Activated T-helper 1 cell treated with anti-CD3 and anti-CD28 coated beads, Interleukin-12 subunit alpha, Interleukin-12 subunit beta, Interleukin-2, Interleukin-4 antibody, amounts not matched to agents 30 ng/mL and 10 ng/mL and 1 ng/mL, durations not matched to agents 14 hours and 24 hours and 36 hours (primary cell): ENCODE measurements at regions of chr5 and their contacts with region 1.

Region 1: GRCh38 chr5:179821581-179822432 is 1.1 kb downstream of the SQSTM1 start:
- DNase-seq: peak; percentile 83
- H3K4me3 Mint-ChIP-seq: peak overlapping the region; percentile 95
- H3K27ac Mint-ChIP-seq: peak overlapping the region; percentile 97
- H3K4me1 Mint-ChIP-seq: peaks cover 48% of the 10 kb centered on the region
- H3K27me3 Mint-ChIP-seq: no peaks in the 10 kb centered on the region

Region 2: GRCh38 chr5:179697993-179698934 is 123.5 kb before region 1 on chr5:
- intact Hi-C with region 1: loop called (anchors 1 kb)
- DNase-seq: peak; percentile 99
- H3K4me3 Mint-ChIP-seq: peak overlapping the region; percentile 100
- H3K27ac Mint-ChIP-seq: peak overlapping the region; percentile 100
- H3K4me1 Mint-ChIP-seq: peaks cover 27% of the 10 kb centered on the region
- H3K27me3 Mint-ChIP-seq: no peaks in the 10 kb centered on the region

Region 3: GRCh38 chr5:179806250-179807222 is 15.3 kb before region 1 on chr5 and contains the start of gene MGAT4B:
- intact Hi-C with region 1: loop called (anchors 1 kb)
- DNase-seq: peak; percentile 67
- H3K4me3 Mint-ChIP-seq: peak within 1 kb of the TSS; percentile 86
- H3K27ac Mint-ChIP-seq: peak within 1 kb of the TSS; percentile 81
- H3K4me1 Mint-ChIP-seq: peaks cover 32% of the 10 kb centered on the region
- H3K27me3 Mint-ChIP-seq: no peaks in the 10 kb centered on the region
- total RNA-seq, gene MGAT4B: 124 and 132 TPM in 2 replicates

Region 4: DNA sequence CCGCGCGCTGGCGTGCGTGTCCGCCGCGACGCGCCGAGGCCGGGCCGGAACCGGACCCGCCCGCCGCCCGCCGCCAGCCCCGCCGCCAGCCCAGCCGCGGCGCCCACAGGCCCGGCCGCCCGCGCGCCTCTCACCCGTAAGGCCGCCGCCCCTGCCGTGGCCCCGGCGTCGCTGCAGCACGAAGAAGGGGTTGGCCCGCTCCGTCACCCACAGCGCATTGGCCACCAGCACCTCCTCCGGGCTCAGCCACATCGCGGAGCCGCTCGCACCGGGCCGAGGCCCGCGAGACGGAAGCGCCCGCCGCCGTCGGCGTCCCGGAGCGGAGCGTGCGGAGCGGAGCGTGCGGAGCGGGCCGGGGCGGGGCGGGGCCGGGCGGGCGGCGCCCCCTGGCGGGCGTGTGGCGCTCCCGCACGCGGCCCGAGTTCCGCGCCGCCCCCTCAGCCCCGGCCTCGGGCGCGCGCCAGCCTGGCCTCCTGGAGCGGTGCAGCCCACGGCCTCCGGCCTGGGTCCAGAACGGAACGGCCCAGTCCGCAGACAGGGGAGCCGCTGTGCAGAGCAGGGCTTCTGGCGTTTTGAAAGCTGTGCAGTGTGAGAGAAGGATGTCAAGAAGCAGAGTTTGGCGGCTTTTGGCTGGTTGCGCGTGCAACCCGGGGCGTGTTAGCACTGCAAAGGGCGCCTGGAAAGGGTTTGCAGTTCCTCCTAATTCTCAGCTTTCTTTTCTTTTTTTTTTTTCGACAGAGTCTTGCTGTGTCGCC is 85.9 kb after region 1 on chr5 and contains the start of gene TBC1D9B:
- intact Hi-C with region 1: loop called (anchors 1 kb)
- DNase-seq: peak; percentile 69
- H3K4me3 Mint-ChIP-seq: peak within 1 kb of the TSS; percentile 95
- H3K27ac Mint-ChIP-seq: peak within 1 kb of the TSS; percentile 89
- H3K4me1 Mint-ChIP-seq: peaks cover 18% of the 10 kb centered on the region
- H3K27me3 Mint-ChIP-seq: peaks cover 2% of the 10 kb centered on the region
- total RNA-seq, gene TBC1D9B: 123 and 127 TPM in 2 replicates

Region 5: DNA sequence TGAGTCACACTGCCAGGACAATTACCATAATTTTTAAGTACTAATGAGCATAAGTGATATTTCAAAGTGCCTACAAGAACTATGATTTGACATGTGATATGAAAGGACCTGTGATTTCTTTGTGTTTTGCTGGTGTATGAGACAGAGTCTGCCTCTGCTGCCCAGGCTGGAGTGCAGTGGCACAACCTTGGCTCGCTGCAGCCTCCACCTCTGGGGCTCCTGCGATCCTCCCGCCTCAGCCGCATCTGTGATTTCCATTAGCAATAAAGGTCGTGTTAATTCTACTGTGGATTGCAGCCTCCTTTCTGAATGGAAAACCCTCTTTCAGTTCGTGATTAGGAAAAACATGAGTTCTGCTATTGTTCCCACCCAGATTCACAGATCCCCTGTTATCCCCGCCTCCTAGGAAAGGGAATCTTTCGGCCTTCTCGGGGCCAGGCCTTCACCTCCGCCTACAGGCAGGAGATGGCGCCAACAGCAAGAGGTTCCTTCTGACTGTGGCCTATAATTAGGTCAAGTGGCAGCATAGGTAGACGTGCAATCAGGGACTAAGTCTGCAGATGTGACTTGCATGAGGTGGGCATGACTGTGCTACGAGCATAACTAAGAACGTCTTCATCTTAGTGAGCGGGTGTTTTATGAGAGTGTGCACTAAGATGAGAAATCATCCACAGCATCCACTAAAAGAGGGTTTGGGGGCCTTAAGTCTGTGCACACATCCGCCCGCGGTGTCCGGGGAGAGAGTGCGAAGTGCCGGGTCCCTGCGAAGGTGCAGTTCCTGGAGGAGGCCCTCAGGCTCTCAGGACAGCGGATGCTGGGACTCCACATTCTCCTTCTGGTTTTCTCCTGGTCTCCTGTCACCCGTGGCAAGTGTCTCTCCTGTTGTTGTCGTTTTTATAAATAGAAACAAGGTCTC is 1360.1 kb after region 1 on chr5:
- intact Hi-C with region 1: loop called (anchors 10 kb)
- DNase-seq: no peak
- H3K4me3 Mint-ChIP-seq: peak overlapping the region; percentile 63
- H3K27ac Mint-ChIP-seq: peak overlapping the region; percentile 64
- H3K4me1 Mint-ChIP-seq: peaks cover 22% of the 10 kb centered on the region
- H3K27me3 Mint-ChIP-seq: peaks cover 5% of the 10 kb centered on the region